ENCODE measurements at regions of chr10 and their contacts with region 1.

Region 1: GRCh38 chr10:70221030-70221429 is 12.2 kb downstream of the PPA1 start:
- DNase-seq: peak; percentile 15
- H3K4me3 ChIP-seq: peak overlapping the region; percentile 5
- H3K27ac ChIP-seq: no peak overlapping the region
- H3K4me1 ChIP-seq: peaks cover 6% of the 10 kb centered on the region
- H3K27me3 ChIP-seq: no peaks in the 10 kb centered on the region
- CTCF ChIP-seq: no peak

Region 2: DNA sequence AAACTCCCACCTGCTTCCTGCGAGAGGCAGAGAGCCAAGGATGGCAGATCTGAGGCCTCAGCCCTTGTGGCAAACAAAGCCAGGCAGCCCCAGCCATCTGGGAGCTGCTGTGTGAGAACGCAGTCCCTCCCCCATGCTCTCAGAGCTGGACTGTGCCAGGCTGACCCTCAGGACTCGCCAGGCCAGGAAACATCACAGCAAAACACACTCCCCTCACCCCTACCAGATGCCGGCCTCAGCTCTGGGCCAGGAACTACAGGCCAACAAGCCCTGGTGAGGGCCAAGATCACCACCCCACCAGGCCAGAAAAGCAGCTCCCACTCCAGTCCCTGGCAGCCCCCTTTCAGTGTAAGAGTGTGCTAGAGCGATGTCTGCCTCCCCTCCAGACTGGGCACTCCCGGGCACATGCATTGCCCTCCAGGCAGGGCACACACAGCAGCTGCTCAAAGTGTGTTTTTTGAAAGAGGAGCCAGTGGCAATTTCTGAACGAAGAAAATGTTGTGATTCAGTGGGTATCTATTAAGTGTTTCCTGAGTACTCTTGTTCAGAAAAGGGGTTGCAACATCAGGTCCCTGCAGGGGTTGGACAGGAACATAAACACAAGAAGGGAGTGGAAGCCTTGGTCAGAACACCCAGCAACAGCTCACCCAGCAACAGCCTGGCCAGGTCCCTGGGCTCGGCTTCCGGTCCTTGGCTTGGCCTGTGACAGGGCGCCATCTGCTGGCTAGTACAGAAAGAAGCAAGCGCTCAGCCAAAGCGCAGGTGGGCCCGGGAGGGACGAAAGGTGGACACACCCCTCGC is 143.1 kb after region 1 on chr10:
- CTCF ChIA-PET with region 1: interaction called, 80 read pairs
- POLR2A ChIA-PET with region 1: no interaction called
- intact Hi-C with region 1: loop called (anchors 1 kb)
- DNase-seq: peak; percentile 95
- H3K4me3 ChIP-seq: no peak overlapping the region
- H3K27ac ChIP-seq: peak overlapping the region; percentile 78
- H3K4me1 ChIP-seq: peaks cover 16% of the 10 kb centered on the region
- H3K27me3 ChIP-seq: no peaks in the 10 kb centered on the region
- CTCF ChIP-seq: peak; percentile 97

Region 3: GRCh38 chr10:70381471-70382421 is 160.7 kb after region 1 on chr10:
- CTCF ChIA-PET with region 1: interaction called, 24 read pairs
- POLR2A ChIA-PET with region 1: no interaction called
- intact Hi-C with region 1: no loop called
- DNase-seq: peak; percentile 77
- H3K4me3 ChIP-seq: peak overlapping the region; percentile 61
- H3K27ac ChIP-seq: peak overlapping the region; percentile 76
- H3K4me1 ChIP-seq: peaks cover 23% of the 10 kb centered on the region
- H3K27me3 ChIP-seq: no peaks in the 10 kb centered on the region
- CTCF ChIP-seq: no peak

Region 4: DNA sequence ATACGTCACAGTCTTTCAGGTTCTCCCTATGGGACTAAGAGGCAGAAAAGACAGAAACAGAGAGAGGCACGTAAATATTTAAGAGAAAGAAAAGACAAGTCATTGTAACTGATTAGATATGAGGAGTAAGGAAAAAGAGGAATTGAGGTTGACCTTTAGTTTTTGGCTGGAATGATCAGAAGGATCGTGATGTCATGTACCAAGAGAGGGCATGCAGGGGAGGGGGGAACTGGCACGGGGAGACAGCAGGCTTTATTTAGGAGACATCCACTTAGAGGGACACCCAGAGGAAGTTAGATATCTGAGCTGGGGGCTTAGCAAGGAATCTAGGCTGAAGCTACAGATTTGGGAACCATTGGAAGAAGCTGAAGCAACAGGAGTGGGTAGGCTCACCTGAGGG is 170.6 kb after region 1 on chr10:
- CTCF ChIA-PET with region 1: interaction called, 24 read pairs
- POLR2A ChIA-PET with region 1: no interaction called
- intact Hi-C with region 1: loop called (anchors 1 kb)
- DNase-seq: no peak
- H3K4me3 ChIP-seq: no peak overlapping the region
- H3K27ac ChIP-seq: no peak overlapping the region
- H3K4me1 ChIP-seq: no peaks in the 10 kb centered on the region
- H3K27me3 ChIP-seq: no peaks in the 10 kb centered on the region
- CTCF ChIP-seq: no peak